Right cardiac atrium (tissue), 5 donors: ENCODE measurements at regions of chr11 and their contacts with region 1.

Region 1: DNA sequence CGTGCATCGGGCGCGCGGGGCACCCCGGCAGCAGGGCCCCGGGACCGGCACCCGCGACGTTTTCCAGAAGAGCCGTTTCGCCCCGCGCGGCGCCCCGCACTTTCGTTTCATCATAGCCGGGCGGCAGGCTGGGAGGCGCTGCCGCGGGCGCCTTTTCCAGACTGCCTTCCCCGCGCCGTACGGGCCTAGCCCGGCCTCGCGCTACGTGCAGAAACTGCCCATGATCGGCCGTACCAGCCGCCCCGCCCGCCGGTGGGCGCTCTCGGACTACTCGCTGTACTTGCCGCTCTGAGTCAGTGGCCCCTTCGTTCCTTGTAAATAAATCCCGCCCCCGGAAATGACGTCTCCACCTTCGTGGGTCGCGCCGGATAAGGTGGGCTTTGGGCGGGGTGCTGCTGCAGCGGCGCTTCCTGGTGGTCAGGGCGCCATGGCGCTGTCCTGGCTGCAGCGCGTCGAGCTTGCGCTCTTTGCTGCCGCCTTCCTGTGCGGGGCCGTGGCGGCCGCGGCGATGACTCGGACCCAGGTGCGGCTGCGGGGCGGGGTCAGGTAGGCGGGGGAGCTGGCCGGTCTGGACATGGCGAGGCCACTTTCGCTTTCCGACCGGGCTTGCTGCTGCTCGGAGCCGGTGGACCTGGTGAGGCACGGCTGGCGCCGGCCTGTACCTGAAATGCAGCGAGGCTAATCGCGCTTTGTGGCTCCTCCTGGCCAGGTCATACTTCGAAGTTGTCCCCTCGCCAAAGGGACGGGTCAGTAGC is at the start of gene TMEM179B:
- DNase-seq: peak; percentile 97 to 99 (median 98)
- ATAC-seq: peak; percentile 90 to 93
- H3K4me3 ChIP-seq: peak within 1 kb of the TSS; percentile 82
- H3K27ac ChIP-seq: peak within 1 kb of the TSS; percentile 93
- H3K4me1 ChIP-seq: peaks cover 3% of the 10 kb centered on the region
- H3K27me3 ChIP-seq: no peaks in the 10 kb centered on the region
- total RNA-seq, gene TMEM179B: 19.2 to 21.8 (median 19.7) TPM

Region 2: DNA sequence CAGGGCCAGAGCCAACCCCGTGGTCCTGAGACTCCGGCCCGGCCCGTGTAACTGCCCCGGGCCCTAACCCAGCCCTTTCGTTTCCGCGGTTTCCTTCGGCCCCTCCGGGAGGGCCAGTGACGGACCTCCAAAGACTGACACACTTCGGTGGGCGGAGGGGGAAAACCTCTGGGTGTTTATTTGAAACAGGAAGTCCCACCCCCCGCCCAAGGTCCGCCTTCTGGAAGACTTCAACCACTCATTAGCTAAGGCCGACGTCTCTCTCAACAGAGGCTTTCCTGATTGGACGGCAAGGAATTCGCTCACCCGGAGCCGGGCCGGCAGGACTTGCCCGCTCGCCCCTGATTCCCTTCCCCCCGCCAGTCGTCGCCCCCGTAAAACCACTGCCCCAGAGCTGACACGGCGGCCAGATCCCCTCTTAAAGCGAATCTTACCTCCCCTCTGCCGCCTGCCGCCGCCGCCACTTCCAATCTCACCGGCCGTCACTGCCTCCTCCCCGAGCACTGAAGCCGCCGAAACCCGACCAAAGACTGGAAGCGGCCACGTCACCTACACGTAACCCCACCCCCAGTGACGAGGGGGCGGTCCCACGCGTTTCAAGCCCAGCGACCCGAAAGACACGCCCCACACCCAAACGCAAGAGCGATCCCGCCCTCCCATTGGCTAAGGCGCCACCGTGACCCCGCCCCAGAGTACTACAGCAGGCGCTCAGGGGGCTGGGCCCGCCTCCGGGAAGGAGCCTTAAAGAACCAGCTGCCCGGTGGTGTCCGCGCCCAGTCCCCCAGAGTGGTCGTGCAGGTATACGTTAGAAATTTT is 44.5 kb after region 1 on chr11 and contains the start of gene STX5:
- intact Hi-C with region 1: loop called in 1 of 4 experiments (anchors 5 kb)
- DNase-seq: peak; percentile 100
- ATAC-seq: peak; percentile 98
- H3K4me3 ChIP-seq: peak within 1 kb of the TSS; percentile 86
- H3K27ac ChIP-seq: peak within 1 kb of the TSS; percentile 96
- H3K4me1 ChIP-seq: peaks cover 9% of the 10 kb centered on the region
- H3K27me3 ChIP-seq: no peaks in the 10 kb centered on the region
- total RNA-seq, gene STX5: 20.1 to 27.8 (median 21.8) TPM

Region 3: DNA sequence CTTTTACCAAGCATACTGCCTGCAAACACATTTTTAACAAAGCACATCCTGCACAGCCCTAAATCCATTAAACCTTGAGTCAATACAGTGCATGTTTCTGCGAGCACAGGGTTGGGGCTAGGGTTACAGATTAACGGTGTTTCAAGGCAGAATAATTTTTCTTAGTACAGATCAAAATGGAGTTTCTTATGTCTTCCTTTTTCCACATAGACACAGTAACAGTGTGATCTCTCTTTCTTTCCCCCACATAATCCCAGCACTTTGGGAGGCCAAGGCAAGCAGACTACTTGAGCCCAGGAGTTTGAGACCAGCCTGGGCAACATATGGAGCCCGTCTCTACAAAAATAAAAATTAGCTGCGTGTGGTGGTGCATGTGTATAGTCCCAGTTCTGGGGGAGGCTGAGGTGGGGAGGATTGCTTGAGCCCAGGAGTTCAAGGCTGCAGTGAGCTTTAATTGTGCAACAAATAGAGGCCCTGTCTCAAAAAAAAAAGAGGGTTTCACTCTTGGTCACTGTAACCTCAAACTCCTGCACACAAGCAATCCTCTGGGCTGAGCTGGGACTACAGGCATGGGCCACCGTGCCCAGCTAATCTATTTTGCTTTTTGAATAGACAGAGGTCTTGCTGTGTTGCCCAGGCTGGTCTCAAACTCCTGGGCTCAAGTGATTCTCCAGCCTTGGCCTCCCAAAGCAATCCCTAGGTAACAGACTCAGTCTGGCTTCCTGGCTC is 73.8 kb after region 1 on chr11:
- intact Hi-C with region 1: loop called in 3 of 4 experiments (anchors 5 to 10 kb)
- DNase-seq: no peak
- ATAC-seq: no peak
- H3K4me3 ChIP-seq: no peak overlapping the region
- H3K27ac ChIP-seq: no peak overlapping the region
- H3K4me1 ChIP-seq: no peaks in the 10 kb centered on the region
- H3K27me3 ChIP-seq: no peaks in the 10 kb centered on the region

Region 4: GRCh38 chr11:63574856-63575602 is 787.8 kb after region 1 on chr11:
- intact Hi-C with region 1: no loop called
- DNase-seq: peak; percentile 49 to 56 (median 55)
- ATAC-seq: peak; percentile 89 to 92
- H3K4me3 ChIP-seq: peak overlapping the region; percentile 33
- H3K27ac ChIP-seq: peak overlapping the region; percentile 93
- H3K4me1 ChIP-seq: peaks cover 11% of the 10 kb centered on the region
- H3K27me3 ChIP-seq: no peaks in the 10 kb centered on the region